ENCODE measurements at regions of chr1 and their contacts with region 1.

Region 1: GRCh38 chr1:205335643-205336091 is 14.1 kb upstream of the NUAK2 start:
- DNase-seq: peak; percentile 78
- CTCF ChIP-seq: peak; percentile 96

Region 2: GRCh38 chr1:205313563-205314308 is 21.9 kb before region 1 on chr1:
- CTCF ChIA-PET with region 1: interaction called, 10 read pairs
- POLR2A ChIA-PET with region 1: no interaction called
- DNase-seq: peak; percentile 65
- CTCF ChIP-seq: no peak